ENCODE measurements at regions of chrX and their contacts with region 1.

Region 1: DNA sequence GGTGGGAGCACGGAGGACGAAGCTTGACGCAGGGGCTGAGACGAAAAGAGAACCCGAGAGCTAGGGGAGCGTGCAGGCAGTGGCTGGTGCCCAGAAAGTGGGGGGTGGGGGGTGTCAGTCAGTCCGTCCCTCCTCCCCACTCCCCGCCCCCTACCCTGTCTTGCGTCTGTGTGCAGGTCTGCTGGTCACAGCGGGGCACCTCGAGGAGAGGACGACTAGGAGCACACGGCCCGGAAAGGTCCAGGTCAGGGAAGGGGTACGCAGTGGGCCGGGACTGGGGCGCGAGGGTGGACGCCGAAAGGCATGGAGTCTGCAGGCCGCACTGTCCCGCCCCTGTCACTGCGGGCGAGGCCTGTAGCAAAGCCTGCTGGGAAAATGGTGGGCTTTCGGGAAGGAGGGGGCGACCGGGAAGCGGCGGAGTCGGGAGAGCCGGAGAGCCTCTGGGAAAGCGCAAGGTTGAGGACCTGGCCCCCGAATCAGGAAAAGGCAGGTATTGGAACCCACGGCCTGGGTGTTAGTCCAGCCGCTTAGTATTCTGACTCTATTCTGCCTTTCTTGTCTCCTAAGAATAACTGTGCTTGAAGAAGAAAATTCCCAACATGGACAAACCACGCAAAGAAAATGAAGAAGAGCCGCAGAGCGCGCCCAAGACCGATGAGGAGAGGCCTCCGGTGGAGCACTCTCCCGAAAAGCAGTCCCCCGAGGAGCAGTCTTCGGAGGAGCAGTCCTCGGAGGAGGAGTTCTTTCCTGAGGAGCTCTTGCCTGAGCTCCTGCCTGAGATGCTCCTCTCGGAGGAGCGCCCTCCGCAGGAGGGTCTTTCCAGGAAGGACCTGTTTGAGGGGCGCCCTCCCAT is 769 bp downstream of the TCEAL1 start:
- DNase-seq: peak; percentile 65 to 67
- ATAC-seq: peak; percentile 90 to 97 (median 96)
- H3K4me3 ChIP-seq: peak overlapping the region; percentile 61 to 79 (median 72)
- H3K27ac ChIP-seq: peak overlapping the region; percentile 69 to 95 (median 92)
- H3K4me1 ChIP-seq: peaks cover 0 to 23% (median 7%) of the 10 kb centered on the region in 9 donors
- H3K27me3 ChIP-seq: peaks cover 0 to 25% (median 0%) of the 10 kb centered on the region in 7 donors
- CTCF ChIP-seq: peak in 8 of 9 donors; percentile 11 to 70 (median 48)

Region 2: GRCh38 chrX:103674531-103675454 is 45.2 kb after region 1 on chrX:
- intact Hi-C with region 1: loop called in 1 of 10 experiments (anchors 5 kb)
- DNase-seq: no peak
- ATAC-seq: peak in 1 of 8 donors; percentile 25
- H3K4me3 ChIP-seq: no peak overlapping the region
- H3K27ac ChIP-seq: no peak overlapping the region
- H3K4me1 ChIP-seq: peaks cover 0 to 10% (median 0%) of the 10 kb centered on the region in 9 donors
- H3K27me3 ChIP-seq: peaks cover 0 to 5% (median 0%) of the 10 kb centered on the region in 7 donors
- CTCF ChIP-seq: no peak

Measured in heart right ventricle (tissue), 16 donors.